OCI-LY7 (cell line): ENCODE measurements at regions of chr10 and their contacts with region 1.

Region 1: GRCh38 chr10:101569838-101570766 is 18.0 kb downstream of the POLL start:
- DNase-seq: peak; percentile 76
- H3K4me3 ChIP-seq: peak overlapping the region; percentile 66
- H3K27ac ChIP-seq: no peak overlapping the region
- H3K4me1 ChIP-seq: peaks cover 20% of the 10 kb centered on the region
- CTCF ChIP-seq: peak; percentile 81

Region 2: DNA sequence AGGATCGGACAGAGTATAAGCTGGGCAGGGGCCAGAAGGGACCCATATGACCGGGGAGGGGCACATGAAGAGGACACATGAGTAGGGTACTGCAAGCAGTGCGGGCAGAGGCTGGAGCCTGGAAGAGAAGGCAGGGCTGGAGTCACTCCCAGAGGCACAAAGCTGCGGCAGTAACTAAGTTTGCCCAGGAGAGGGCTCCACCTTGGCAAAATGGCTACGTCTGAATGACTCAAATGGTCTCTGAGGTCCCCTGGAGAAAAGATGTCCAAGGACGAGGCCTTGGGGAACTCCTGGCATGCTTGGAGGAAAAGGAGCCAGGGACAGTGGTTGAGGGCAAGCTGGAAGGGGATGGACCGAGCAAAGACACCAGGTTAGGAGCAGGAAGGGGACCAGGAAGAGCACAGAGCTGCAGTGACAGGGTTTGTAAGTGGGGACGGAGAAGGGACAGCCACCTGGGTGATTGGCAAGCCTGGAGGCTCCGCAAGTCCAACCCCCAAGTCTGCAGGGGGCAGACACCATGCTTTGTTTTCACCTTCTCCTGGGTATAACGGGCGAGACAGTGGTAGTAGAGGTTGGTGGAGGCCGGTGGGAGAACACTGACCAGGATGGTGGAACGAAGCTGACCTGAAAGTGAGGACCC is 297.8 kb before region 1 on chr10:
- CTCF ChIA-PET with region 1: no interaction called
- POLR2A ChIA-PET with region 1: no interaction called
- intact Hi-C with region 1: loop called (anchors 1 kb)
- DNase-seq: peak; percentile 60
- H3K4me3 ChIP-seq: no peak overlapping the region
- H3K27ac ChIP-seq: no peak overlapping the region
- H3K4me1 ChIP-seq: no peaks in the 10 kb centered on the region
- CTCF ChIP-seq: peak; percentile 85

Region 3: GRCh38 chr10:101655570-101655969 is 85.5 kb after region 1 on chr10:
- CTCF ChIA-PET with region 1: no interaction called
- POLR2A ChIA-PET with region 1: no interaction called
- intact Hi-C with region 1: no loop called
- DNase-seq: no peak
- H3K4me3 ChIP-seq: no peak overlapping the region
- H3K27ac ChIP-seq: no peak overlapping the region
- H3K4me1 ChIP-seq: no peaks in the 10 kb centered on the region
- CTCF ChIP-seq: no peak

Region 4: DNA sequence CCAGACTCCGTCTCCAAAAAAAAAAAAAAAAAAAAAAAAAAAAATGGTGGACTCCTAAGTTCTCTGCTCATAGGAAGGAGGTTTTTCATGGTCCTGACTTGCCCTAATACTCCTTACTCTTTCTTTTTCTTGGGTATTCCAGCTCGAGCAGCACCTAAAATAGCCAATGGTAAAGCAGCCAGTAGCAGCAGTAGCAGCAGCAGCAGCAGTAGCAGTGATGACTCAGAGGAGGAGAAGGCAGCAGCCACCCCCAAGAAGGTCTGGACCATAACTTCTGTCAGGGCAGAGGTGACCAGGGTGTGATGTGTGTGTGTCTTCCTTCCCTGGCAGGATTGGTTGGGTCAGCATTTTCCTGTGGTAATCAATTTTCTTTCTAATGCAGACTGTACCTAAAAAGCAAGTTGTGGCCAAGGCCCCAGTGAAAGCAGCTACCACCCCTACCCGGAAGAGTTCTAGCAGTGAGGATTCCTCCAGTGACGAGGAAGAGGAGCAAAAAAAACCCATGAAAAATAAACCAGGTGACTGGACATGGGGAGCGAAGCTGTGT is 589.0 kb after region 1 on chr10:
- CTCF ChIA-PET with region 1: no interaction called
- POLR2A ChIA-PET with region 1: no interaction called
- intact Hi-C with region 1: no loop called
- DNase-seq: no peak
- H3K4me3 ChIP-seq: no peak overlapping the region
- H3K27ac ChIP-seq: no peak overlapping the region
- H3K4me1 ChIP-seq: peaks cover 29% of the 10 kb centered on the region
- CTCF ChIP-seq: no peak

Region 5: GRCh38 chr10:102245101-102245931 is 675.2 kb after region 1 on chr10 and contains the start of gene GBF1:
- CTCF ChIA-PET with region 1: no interaction called
- POLR2A ChIA-PET with region 1: no interaction called
- intact Hi-C with region 1: no loop called
- DNase-seq: peak; percentile 100
- H3K4me3 ChIP-seq: peak within 1 kb of the TSS; percentile 82
- H3K27ac ChIP-seq: peak within 1 kb of the TSS; percentile 11
- H3K4me1 ChIP-seq: peaks cover 30% of the 10 kb centered on the region
- CTCF ChIP-seq: no peak
- total RNA-seq, gene GBF1: 13.8 and 17.8 TPM in 2 replicates